ENCODE measurements at regions of chr12 and their contacts with region 1.

Region 1: DNA sequence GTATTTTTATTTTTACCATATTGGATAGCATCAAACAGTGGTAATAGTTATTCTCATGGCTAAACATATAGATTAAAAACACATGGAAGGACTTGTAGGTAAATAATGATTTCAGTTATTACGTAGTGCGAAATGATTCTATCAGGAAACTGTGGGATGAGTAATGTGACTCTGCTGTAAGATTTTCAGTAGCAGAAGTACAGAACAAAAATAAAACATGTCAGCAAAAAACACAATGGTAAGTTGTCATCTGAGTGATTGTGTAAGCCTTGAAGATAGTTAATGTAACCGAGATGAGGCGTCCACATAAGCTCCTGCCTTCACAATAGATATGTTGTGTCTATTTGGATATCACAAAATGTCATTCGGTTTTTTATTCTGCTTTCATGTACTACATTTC is 99.8 kb downstream of the BORCS5 start:
- DNase-seq: no peak
- H3K4me3 Mint-ChIP-seq: no peak overlapping the region
- H3K27ac Mint-ChIP-seq: peak overlapping the region; percentile 74
- H3K4me1 Mint-ChIP-seq: peaks cover 30% of the 10 kb centered on the region
- H3K27me3 Mint-ChIP-seq: no peaks in the 10 kb centered on the region

Region 2: DNA sequence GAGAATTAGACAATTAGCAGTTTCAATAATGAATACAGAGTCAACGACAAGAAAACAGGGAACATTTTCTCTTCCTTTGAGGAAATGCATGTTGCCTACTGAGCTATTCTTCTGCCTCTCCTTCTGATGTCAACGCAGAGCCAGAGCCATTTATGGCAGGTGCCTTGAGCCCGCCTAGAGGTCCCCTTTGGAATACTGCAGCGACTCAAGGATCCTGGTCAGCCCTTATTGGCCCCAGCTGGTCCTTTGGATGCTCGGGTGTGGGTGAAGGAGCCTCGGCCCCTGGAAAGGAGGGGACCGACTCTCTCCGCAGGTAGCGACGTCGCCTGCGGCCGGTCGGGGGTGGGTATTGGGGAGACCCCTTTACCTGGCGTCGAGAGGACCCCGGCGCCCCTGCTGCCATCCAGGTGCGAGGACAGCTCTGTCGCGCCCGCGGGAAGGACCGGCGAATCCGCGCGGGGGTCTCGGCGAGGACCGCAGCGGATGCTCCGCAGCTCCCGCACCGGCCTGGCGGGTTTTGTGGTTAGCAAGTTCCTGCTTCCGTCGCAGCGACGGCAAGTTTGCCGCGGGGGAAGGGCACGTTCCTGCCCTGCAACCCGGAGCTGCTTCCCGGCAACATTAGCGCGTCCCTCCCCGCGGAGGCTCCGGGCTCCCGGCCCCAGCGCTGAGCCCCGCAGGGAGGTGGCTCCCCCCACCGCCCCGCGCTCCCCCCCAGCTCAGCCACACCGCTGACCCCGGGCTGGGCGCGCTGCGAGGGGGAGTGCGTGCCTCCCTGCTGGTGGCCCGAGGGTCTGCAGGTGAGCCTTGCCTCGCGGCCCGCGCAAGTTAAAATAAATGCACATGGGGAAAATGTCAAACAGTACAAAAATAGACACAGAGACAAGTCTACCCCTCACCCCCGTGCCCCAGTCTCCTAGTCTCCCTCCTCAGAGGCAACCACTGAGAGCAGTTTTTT is 106.6 kb before region 1 on chr12 and contains the start of gene MANSC1:
- CTCF ChIA-PET with region 1: no interaction called
- DNase-seq: peak; percentile 73
- H3K4me3 Mint-ChIP-seq: peak within 1 kb of the TSS; percentile 69
- H3K27ac Mint-ChIP-seq: peak within 1 kb of the TSS; percentile 59
- H3K4me1 Mint-ChIP-seq: peaks cover 37% of the 10 kb centered on the region
- H3K27me3 Mint-ChIP-seq: no peaks in the 10 kb centered on the region

Region 3: GRCh38 chr12:12432364-12432763 is 24.3 kb before region 1 on chr12:
- CTCF ChIA-PET with region 1: no interaction called
- DNase-seq: no peak
- H3K4me3 Mint-ChIP-seq: no peak overlapping the region
- H3K27ac Mint-ChIP-seq: peak overlapping the region; percentile 12
- H3K4me1 Mint-ChIP-seq: peaks cover 4% of the 10 kb centered on the region
- H3K27me3 Mint-ChIP-seq: no peaks in the 10 kb centered on the region

Region 4: DNA sequence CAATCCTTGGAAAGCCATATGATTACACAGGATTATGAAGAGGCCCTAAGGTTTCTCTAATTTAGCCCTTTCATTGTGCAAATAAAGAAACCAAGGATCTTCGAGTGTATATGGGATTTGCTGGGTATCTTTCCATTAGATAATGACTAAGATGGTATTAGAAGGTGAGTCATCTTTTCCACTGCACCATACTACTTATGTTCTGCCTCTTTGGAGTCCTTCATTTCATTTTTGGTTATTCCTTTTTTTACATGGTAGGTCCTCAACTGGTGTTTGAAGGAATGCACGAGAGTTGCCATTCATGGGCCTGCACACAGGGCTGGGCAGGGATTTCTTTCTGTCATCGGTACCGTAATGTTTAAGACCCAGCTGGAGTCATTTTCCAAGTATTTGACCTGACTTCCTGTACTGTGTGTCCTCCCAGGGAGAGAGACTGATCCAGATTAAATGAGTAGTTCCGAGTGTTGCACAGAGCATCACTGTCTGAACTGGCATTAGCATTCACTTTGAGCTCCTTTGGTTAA is 14.0 kb before region 1 on chr12:
- CTCF ChIA-PET with region 1: interaction called, 17 read pairs
- DNase-seq: no peak
- H3K4me3 Mint-ChIP-seq: no peak overlapping the region
- H3K27ac Mint-ChIP-seq: peak overlapping the region; percentile 94
- H3K4me1 Mint-ChIP-seq: peaks cover 50% of the 10 kb centered on the region
- H3K27me3 Mint-ChIP-seq: no peaks in the 10 kb centered on the region

Region 5: GRCh38 chr12:12467688-12468261 is 11.1 kb after region 1 on chr12:
- CTCF ChIA-PET with region 1: interaction called, 14 read pairs
- DNase-seq: peak; percentile 46
- H3K4me3 Mint-ChIP-seq: no peak overlapping the region
- H3K27ac Mint-ChIP-seq: peak overlapping the region; percentile 77
- H3K4me1 Mint-ChIP-seq: peaks cover 66% of the 10 kb centered on the region
- H3K27me3 Mint-ChIP-seq: no peaks in the 10 kb centered on the region

Region 6: GRCh38 chr12:12474931-12475795 is 18.5 kb after region 1 on chr12:
- CTCF ChIA-PET with region 1: interaction called, 11 read pairs
- DNase-seq: peak; percentile 56
- H3K4me3 Mint-ChIP-seq: peak overlapping the region; percentile 43
- H3K27ac Mint-ChIP-seq: peak overlapping the region; percentile 96
- H3K4me1 Mint-ChIP-seq: peaks cover 64% of the 10 kb centered on the region
- H3K27me3 Mint-ChIP-seq: no peaks in the 10 kb centered on the region

Region 7: GRCh38 chr12:12749433-12749832 is 292.8 kb after region 1 on chr12:
- CTCF ChIA-PET with region 1: no interaction called
- DNase-seq: no peak
- H3K4me3 Mint-ChIP-seq: no peak overlapping the region
- H3K27ac Mint-ChIP-seq: no peak overlapping the region
- H3K4me1 Mint-ChIP-seq: peaks cover 15% of the 10 kb centered on the region
- H3K27me3 Mint-ChIP-seq: no peaks in the 10 kb centered on the region